WTC11 (cell line): ENCODE measurements at regions of chr2 and their contacts with region 1.

Region 1: GRCh38 chr2:230847883-230848388 is 16.8 kb upstream of the ITM2C start:
- DNase-seq: peak; percentile 97
- ATAC-seq: peak; percentile 79
- H3K4me3 Mint-ChIP-seq: no peak overlapping the region
- H3K27ac Mint-ChIP-seq: no peak overlapping the region
- H3K4me1 Mint-ChIP-seq: peaks cover 17% of the 10 kb centered on the region
- H3K27me3 Mint-ChIP-seq: peaks cover 25% of the 10 kb centered on the region
- CTCF ChIP-seq: peak; percentile 96

Region 2: DNA sequence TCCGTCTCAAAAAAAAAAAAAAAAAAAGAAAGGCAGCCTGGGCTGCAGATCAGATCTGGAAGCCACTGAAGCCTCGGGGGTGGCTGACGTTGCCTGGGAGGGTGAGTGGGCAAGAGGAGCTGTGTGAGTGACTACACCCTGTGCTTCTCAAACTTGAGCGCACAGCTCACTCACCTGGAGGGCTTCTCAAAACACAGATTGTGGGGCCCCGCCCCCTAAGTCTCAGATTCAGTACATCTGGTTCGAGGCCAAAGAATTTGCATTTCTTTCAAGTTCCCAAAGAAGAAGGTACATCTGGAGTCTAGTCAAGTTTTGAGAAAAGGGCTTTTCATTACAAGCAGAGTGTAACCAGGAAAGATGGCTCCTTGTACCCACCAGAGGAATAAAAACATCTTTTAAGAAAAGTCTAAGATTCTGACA is 233.0 kb before region 1 on chr2:
- CTCF ChIA-PET with region 1: no interaction called
- POLR2A ChIA-PET with region 1: no interaction called
- DNase-seq: no peak
- ATAC-seq: no peak
- H3K4me3 Mint-ChIP-seq: no peak overlapping the region
- H3K27ac Mint-ChIP-seq: no peak overlapping the region
- H3K4me1 Mint-ChIP-seq: 0 out of 2 replicates have a peak, but pooled peaks cover 5% of the 10 kb centered on the region
- H3K27me3 Mint-ChIP-seq: no peaks in the 10 kb centered on the region
- CTCF ChIP-seq: no peak

Region 3: GRCh38 chr2:230680463-230681170 is 167.3 kb before region 1 on chr2:
- CTCF ChIA-PET with region 1: no interaction called
- POLR2A ChIA-PET with region 1: no interaction called
- DNase-seq: no peak
- ATAC-seq: no peak
- H3K4me3 Mint-ChIP-seq: no peak overlapping the region
- H3K27ac Mint-ChIP-seq: no peak overlapping the region
- H3K4me1 Mint-ChIP-seq: no peaks in the 10 kb centered on the region
- H3K27me3 Mint-ChIP-seq: peaks cover 7% of the 10 kb centered on the region
- CTCF ChIP-seq: no peak

Region 4: DNA sequence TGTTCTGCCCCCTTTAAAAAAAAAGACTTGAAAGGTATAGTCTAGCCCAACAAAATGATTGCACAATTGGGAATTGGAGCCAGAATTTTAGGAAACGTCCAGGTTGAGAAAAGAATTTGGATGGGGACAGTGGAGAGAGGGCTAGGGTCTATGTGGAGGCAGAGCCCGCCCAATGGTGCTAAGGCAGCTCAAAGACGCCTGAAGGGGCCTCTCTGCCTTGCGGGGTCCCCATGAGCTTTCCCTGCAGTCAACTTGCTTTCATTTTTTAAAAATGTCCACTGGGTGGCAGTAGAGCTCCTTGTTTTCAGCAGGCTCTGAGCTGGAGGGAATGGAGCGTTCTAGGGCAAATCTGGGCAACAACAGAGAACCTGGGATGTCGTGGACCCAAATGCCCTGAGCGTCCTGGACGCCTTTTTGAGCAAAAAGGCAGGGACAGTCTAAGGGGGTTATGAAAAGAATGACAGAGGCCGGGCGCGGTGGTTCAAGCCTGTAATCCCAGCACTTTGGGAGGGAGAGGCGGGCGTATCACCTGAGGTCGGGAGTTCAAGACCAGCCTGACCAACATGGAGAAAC is 23.4 kb before region 1 on chr2:
- CTCF ChIA-PET with region 1: interaction called, 27 read pairs
- POLR2A ChIA-PET with region 1: no interaction called
- DNase-seq: peak; percentile 59
- ATAC-seq: peak; percentile 89
- H3K4me3 Mint-ChIP-seq: no peak overlapping the region; the same call in 1 of the 2 replicates
- H3K27ac Mint-ChIP-seq: no peak overlapping the region
- H3K4me1 Mint-ChIP-seq: peaks cover 11% of the 10 kb centered on the region
- H3K27me3 Mint-ChIP-seq: peaks cover 5% of the 10 kb centered on the region; the same call in 1 of the 2 replicates
- CTCF ChIP-seq: peak; percentile 70

Region 5: GRCh38 chr2:230861552-230862255 is 13.8 kb after region 1 on chr2:
- CTCF ChIA-PET with region 1: interaction called, 40 read pairs
- POLR2A ChIA-PET with region 1: no interaction called
- DNase-seq: peak; percentile 56
- ATAC-seq: peak; percentile 73
- H3K4me3 Mint-ChIP-seq: peak overlapping the region; percentile 5
- H3K27ac Mint-ChIP-seq: peak overlapping the region; percentile 17
- H3K4me1 Mint-ChIP-seq: peaks cover 42% of the 10 kb centered on the region
- H3K27me3 Mint-ChIP-seq: no peaks in the 10 kb centered on the region; the same call in 1 of the 2 replicates
- CTCF ChIP-seq: no peak

Region 6: GRCh38 chr2:230879271-230879882 is 31.4 kb after region 1 on chr2:
- CTCF ChIA-PET with region 1: no interaction called
- POLR2A ChIA-PET with region 1: no interaction called
- DNase-seq: peak; percentile 6
- ATAC-seq: no peak
- H3K4me3 Mint-ChIP-seq: no peak overlapping the region
- H3K27ac Mint-ChIP-seq: peak overlapping the region; percentile 89
- H3K4me1 Mint-ChIP-seq: 0 out of 2 replicates have a peak, but pooled peaks cover 2% of the 10 kb centered on the region
- H3K27me3 Mint-ChIP-seq: no peaks in the 10 kb centered on the region
- CTCF ChIP-seq: no peak

Region 7: DNA sequence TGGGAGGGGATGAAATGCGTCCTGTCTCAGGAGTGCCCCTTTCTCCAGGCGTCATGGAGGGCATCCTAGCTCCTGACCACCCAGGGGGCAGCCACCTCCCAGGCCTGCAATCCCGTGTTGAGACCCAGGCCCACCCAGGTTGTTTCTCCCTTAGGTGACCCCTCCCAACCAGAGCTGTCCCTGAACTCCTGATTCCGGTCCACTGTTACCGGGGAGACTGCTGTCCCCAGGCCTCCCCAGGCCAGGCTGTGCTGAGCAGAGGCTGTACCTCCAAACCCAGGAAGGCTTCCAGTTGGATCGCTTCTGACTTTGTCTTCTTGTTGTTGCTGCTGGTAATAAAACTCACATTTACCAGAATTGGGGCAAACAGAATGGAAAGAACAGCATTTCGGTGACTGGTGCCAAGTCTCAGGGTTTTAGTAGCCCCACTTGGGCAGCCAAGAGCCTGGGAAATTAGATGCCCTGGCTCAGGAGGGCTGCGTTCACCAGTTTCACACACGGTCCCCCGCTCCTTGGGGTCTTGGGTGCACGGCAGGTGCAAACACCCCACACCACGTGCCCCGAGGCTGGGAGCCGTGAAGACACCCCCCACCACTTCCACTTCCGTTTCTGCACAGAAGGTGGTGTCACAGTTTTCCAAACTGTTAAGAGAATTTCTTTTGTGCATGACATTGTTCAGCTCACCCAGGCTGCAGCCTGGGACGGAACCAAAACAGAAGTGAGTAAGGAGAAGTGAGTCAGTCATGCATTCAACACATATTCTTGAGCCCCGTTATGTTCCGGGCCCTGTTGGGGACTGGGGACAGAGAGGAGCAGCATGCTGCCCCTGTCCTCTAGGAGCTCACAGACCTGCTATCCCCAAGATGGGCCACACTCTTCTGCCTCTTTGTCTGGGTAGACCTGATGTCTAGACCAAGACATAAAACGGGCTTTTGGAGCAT is 46.2 kb after region 1 on chr2:
- CTCF ChIA-PET with region 1: interaction called, 10 read pairs
- POLR2A ChIA-PET with region 1: no interaction called
- DNase-seq: peak; percentile 9
- ATAC-seq: no peak
- H3K4me3 Mint-ChIP-seq: no peak overlapping the region
- H3K27ac Mint-ChIP-seq: peak overlapping the region; percentile 8; the same call in 1 of the 2 replicates
- H3K4me1 Mint-ChIP-seq: peaks cover 23% of the 10 kb centered on the region
- H3K27me3 Mint-ChIP-seq: no peaks in the 10 kb centered on the region; the same call in 1 of the 2 replicates
- CTCF ChIP-seq: no peak

Region 8: DNA sequence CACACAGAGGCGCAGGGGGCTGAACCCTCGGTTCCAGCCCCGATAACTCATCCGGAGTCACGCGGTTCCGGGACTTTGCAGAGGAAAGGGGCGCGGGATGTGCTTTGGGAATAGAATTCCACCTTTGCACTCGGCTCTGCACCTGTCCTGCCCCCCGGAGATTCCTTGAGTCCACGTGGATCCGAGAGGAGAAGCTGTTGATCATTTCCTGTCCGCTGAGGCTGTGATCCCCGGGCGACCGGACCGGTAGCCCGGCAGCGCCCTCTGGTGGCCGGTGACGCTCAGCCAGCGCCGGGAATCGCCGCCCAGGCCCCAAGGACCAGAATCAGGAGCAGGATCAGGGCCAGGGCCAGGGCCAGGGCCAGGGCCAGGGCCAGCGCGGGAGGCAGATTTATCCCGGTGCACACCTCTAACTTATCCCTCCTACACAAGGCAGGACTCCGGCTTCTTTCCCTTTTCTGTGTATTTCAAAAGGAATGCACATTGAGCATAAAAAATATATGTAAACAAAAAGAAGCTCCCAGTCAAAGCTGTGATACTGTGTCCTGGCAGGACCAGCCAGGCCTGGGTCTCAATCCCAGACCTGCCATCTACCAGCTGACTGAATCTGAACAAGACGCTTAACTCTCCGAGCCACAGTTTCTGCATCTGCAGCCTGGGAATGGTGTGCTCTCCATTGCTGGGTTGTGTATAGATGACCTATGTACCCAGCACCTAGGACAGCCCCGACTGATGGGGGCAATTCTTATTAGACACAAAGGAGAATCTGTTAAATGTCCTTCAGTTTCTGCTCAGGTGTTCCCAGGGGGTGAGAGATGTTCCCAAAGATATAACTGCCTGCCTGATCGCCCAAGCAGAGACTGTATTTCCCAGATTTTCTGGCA is 139.4 kb after region 1 on chr2:
- CTCF ChIA-PET with region 1: interaction called, 14 read pairs
- POLR2A ChIA-PET with region 1: no interaction called
- DNase-seq: peak; percentile 92
- ATAC-seq: peak; percentile 78
- H3K4me3 Mint-ChIP-seq: peak overlapping the region; percentile 61
- H3K27ac Mint-ChIP-seq: peak overlapping the region; percentile 58
- H3K4me1 Mint-ChIP-seq: peaks cover 24% of the 10 kb centered on the region
- H3K27me3 Mint-ChIP-seq: no peaks in the 10 kb centered on the region
- CTCF ChIP-seq: peak; percentile 93

Region 9: DNA sequence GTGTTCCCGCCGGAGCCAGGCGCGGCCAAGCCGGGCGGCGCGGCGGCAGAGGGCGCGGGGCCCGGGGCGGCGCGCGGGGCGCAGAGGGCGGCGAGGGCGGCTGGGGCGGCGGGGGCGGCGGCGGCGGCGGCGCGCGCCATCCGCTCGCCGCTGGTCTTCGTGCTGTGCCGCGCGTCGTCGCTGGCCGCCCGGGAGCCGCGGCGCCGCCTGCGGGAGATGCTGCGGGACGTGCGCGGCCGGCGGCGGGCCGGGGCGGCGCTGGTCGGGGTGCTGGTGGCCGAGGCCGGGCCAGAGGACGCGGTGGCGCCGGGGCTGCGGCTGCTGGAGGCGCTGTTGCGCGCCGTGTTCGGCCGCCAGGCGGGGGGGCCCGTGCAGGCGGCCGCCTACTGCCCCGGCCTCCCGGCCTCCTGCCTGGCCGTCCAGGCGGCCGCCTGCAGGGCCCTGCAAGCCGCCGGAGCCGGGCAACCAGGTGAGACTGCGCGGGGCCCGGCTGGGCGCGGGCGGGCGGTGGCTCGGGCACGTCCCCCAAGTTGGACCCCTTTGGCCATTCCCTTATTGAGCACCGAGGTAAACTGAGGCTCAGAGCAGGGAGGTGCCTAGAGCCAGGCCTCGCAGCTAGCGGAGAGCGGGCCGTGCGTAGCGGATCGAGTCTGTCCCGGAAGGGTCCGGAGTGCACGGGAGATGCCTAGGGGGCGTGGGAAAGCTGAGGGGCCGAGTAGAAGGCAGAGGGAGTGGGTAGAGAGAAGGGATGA is 190.0 kb after region 1 on chr2:
- CTCF ChIA-PET with region 1: no interaction called
- POLR2A ChIA-PET with region 1: no interaction called
- DNase-seq: peak; percentile 35
- ATAC-seq: peak; percentile 59
- H3K4me3 Mint-ChIP-seq: peak overlapping the region; percentile 69
- H3K27ac Mint-ChIP-seq: no peak overlapping the region
- H3K4me1 Mint-ChIP-seq: peaks cover 11% of the 10 kb centered on the region
- H3K27me3 Mint-ChIP-seq: peaks cover 77% of the 10 kb centered on the region
- CTCF ChIP-seq: no peak